ENCODE measurements at regions of chr4 and their contacts with region 1.

Region 1: GRCh38 chr4:78612398-78613178 is 61.0 kb downstream of the ANXA3 start:
- DNase-seq: peak; percentile 62
- H3K4me3 ChIP-seq: no peak overlapping the region
- H3K27ac ChIP-seq: no peak overlapping the region
- H3K4me1 ChIP-seq: no peaks in the 10 kb centered on the region
- H3K27me3 ChIP-seq: no peaks in the 10 kb centered on the region
- CTCF ChIP-seq: peak; percentile 45 to 46
- POLR2A ChIP-seq: no peak

Region 2: DNA sequence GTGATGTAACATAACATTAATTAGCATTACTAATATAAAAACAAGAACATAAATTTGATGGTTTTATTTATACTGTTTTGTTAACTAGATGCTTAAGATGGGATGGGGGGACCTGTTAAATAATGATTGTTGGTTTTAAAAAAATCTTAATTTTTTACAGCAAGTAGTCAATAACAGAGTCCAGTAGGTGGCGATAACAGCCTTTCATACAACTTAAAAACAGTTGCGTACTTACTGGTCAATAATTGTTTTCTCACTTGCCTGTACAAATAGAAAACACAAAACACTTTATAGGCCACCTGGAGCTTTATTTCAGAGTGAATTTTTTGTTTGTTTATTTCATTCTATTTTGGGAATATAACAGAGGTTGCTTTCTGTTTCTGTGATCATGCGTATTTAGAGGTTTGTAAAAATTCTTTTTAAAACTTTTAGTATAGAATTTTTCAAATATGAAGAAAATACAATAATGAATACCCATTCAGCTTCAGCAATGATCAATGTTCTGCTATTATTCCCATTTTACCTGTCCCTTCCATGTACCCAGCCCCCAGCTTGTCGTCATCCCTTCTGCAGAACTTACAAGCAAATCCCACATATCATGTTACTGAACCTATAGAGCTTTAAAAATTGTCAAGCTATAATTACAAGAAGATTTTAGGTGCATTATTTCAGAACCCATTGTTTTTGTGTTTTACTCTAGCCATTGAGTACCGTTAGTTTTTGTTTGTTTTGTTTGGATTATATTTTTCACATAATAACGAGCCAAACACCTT is 652.8 kb before region 1 on chr4:
- CTCF ChIA-PET with region 1: no interaction called
- POLR2A ChIA-PET with region 1: no interaction called
- dilution Hi-C with region 1: no loop called
- intact Hi-C with region 1: loop called (anchors 2 kb)
- DNase-seq: peak; percentile 55
- H3K4me3 ChIP-seq: no peak overlapping the region
- H3K27ac ChIP-seq: no peak overlapping the region
- H3K4me1 ChIP-seq: no peaks in the 10 kb centered on the region
- H3K27me3 ChIP-seq: no peaks in the 10 kb centered on the region
- CTCF ChIP-seq: peak; percentile 27 to 45
- POLR2A ChIP-seq: no peak

Region 3: GRCh38 chr4:78584863-78585547 is 27.6 kb before region 1 on chr4:
- CTCF ChIA-PET with region 1: no interaction called
- POLR2A ChIA-PET with region 1: no interaction called
- dilution Hi-C with region 1: no loop called
- intact Hi-C with region 1: no loop called
- DNase-seq: no peak
- H3K4me3 ChIP-seq: no peak overlapping the region
- H3K27ac ChIP-seq: no peak overlapping the region
- H3K4me1 ChIP-seq: no peaks in the 10 kb centered on the region
- H3K27me3 ChIP-seq: no peaks in the 10 kb centered on the region
- CTCF ChIP-seq: no peak
- POLR2A ChIP-seq: no peak

Region 4: GRCh38 chr4:78938868-78939666 is 326.5 kb after region 1 on chr4 and contains the start of gene PAQR3:
- CTCF ChIA-PET with region 1: interaction called, 5 read pairs
- POLR2A ChIA-PET with region 1: no interaction called
- dilution Hi-C with region 1: no loop called
- intact Hi-C with region 1: loop called (anchors 10 kb)
- DNase-seq: peak; percentile 82
- H3K4me3 ChIP-seq: peak within 1 kb of the TSS; percentile 56 to 84 (median 62)
- H3K27ac ChIP-seq: peak within 1 kb of the TSS; percentile 4
- H3K4me1 ChIP-seq: peaks cover 13% of the 10 kb centered on the region
- H3K27me3 ChIP-seq: peaks cover 6 to 7% of the 10 kb centered on the region in 2 experiments
- CTCF ChIP-seq: no peak
- POLR2A ChIP-seq: peak; percentile 94
- total RNA-seq, gene PAQR3: 19.0 and 21.0 TPM in 2 replicates

Measured in endothelial cell of umbilical vein (primary cell).